Dendritic cell treated with granulocyte-macrophage colony-stimulating factor and Interleukin-4, amounts not matched to agents 40 ng/mL and 50 ng/mL, for 4 days (primary cell): ENCODE measurements at regions of chr19 and their contacts with region 1.

Region 1: GRCh38 chr19:58154679-58155648 is 4.4 kb upstream of the ZNF329 start:
- H3K4me3 Mint-ChIP-seq: peak overlapping the region; percentile 76
- H3K27ac Mint-ChIP-seq: peak overlapping the region; percentile 65
- H3K4me1 Mint-ChIP-seq: peaks cover 10% of the 10 kb centered on the region
- H3K27me3 Mint-ChIP-seq: peaks cover 9% of the 10 kb centered on the region

Region 2: DNA sequence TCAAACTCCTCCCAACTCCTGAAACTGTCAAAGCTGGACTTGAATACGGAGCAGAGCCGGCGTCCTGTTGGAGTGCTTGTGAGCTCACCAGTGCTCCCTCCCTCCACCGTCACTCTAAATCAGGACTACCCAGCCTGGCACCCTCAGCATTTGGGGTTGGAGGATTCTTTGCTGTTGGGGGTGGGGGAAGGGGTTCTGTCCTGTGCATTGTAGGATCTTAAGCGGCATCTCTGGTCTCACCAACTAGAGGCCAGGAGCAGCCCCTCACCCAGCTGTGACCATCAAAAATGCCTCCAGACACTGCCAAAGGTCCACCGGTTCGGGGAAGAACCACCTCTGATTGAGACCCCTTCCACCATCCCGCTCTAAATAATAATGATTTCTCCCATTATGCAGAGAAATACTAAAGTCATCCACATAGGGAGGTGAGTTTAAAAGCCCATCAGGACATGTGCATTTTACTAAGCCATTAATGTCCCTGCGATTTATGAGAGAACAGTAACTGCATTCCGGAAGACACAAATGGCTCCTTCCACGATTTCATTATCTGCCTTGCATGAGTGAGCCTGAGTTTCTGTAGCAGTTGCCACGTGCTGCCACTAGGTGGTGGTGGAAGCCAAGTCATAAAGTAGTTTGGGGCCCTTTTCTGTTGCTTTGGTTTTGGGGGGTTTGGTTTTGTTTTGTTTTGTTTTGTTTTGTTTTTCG is 1051.2 kb before region 1 on chr19:
- intact Hi-C with region 1: loop called (anchors 5 kb)
- H3K4me3 Mint-ChIP-seq: no peak overlapping the region
- H3K27ac Mint-ChIP-seq: no peak overlapping the region
- H3K4me1 Mint-ChIP-seq: no peaks in the 10 kb centered on the region
- H3K27me3 Mint-ChIP-seq: peaks cover 21% of the 10 kb centered on the region

Region 3: GRCh38 chr19:57465495-57466395 is 689.2 kb before region 1 on chr19:
- intact Hi-C with region 1: loop called (anchors 10 kb)
- H3K4me3 Mint-ChIP-seq: no peak overlapping the region
- H3K27ac Mint-ChIP-seq: no peak overlapping the region
- H3K4me1 Mint-ChIP-seq: no peaks in the 10 kb centered on the region
- H3K27me3 Mint-ChIP-seq: no peaks in the 10 kb centered on the region

Region 4: GRCh38 chr19:58002384-58003173 is 152.4 kb before region 1 on chr19 and contains the start of gene ZNF606:
- intact Hi-C with region 1: loop called (anchors 10 kb)
- H3K4me3 Mint-ChIP-seq: peak within 1 kb of the TSS; percentile 85
- H3K27ac Mint-ChIP-seq: peak within 1 kb of the TSS; percentile 92
- H3K4me1 Mint-ChIP-seq: peaks cover 37% of the 10 kb centered on the region
- H3K27me3 Mint-ChIP-seq: no peaks in the 10 kb centered on the region

Region 5: DNA sequence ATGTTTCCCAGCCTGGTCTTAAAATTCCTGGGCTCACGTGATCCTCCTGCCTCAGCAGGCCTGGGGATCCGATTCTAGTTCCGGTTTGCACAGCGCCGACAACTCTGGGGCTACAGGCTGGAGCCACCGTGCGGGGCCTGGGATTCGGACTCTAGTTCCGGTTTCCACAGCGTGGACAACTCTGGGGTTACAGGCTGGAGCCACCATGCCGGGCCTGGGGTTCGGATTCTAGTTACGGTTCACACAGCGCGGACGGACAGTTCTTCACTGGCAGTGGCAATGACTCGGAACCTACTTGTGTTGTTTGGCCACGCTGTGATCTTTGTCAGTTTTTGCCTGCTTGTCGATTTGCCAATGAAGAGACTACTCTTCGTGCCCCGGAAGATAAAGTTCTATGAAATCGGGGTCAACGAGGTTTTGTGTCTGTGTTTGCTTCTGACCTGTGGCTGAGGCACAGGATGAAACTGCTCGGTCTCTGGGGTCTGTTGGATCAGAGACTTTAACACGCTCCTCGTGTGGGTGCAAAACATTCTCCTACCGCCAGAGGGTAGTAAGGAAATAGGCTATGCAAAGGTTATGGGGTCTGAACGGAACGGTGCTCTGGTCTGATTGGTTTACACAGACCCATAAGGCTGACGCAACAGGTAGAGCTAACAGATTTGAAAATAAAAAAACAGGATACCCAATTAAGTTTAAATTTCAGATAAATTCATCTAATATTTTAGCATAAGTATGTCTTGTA is 133.3 kb before region 1 on chr19:
- intact Hi-C with region 1: loop called (anchors 5 kb)
- H3K4me3 Mint-ChIP-seq: no peak overlapping the region
- H3K27ac Mint-ChIP-seq: no peak overlapping the region
- H3K4me1 Mint-ChIP-seq: no peaks in the 10 kb centered on the region
- H3K27me3 Mint-ChIP-seq: no peaks in the 10 kb centered on the region